CD8-positive, alpha-beta memory T cell (primary cell): ENCODE measurements at regions of chr17 and their contacts with region 1.

Region 1: DNA sequence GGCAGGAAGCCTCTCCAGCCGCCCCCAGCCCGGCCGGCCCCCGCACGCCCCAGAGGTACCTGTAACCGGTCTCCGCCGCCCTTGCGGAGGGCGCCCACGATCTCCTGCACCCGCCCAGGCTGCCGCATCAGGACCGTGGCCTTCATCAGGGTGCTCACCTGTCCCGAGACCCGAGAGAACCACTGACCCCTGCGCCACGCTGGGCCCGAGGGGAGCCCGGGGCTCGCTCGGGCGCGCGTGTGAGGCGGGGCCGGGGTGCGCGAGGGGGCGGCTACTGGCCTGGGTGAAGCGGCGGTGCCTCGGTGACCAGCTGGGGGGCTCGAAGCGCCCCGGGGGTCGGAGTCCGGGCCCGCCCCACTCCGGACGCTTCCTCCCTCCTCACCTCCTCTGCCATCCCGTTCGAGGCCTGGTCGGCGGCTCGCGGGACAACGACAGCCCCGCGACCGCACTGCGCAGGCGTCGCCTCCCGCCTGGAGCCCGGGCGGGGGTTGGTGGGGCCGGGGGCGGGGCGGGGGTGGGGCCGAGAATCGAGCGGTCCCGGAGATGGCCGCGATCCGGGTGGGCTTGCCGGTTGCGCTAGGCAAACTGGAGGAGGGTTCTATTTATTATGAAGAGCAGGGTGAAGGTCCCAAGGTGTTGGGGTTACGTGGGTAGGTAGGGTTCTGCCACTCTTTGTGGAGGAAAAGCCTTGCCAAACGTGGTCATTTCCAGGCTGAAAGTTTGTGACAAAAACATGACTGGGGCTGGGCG is at the start of gene NT5C3B:
- DNase-seq: peak; percentile 31 to 74 (median 54)
- H3K4me3 ChIP-seq: peak within 1 kb of the TSS; percentile 56
- H3K4me3 Mint-ChIP-seq: peak within 1 kb of the TSS; percentile 85 to 92 (median 88)
- H3K27ac ChIP-seq: peak within 1 kb of the TSS; percentile 43
- H3K27ac Mint-ChIP-seq: peak within 1 kb of the TSS in 7 of 8 donors; percentile 21 to 91 (median 78)
- H3K4me1 ChIP-seq: peaks cover 17% of the 10 kb centered on the region
- H3K4me1 Mint-ChIP-seq: peaks cover 11 to 23% (median 13%) of the 10 kb centered on the region in 3 donors
- H3K27me3 ChIP-seq: no peaks in the 10 kb centered on the region
- H3K27me3 Mint-ChIP-seq: peaks cover 0 to 3% of the 10 kb centered on the region in 2 donors
- total RNA-seq, gene NT5C3B: 48.5 to 50.2 TPM

Region 2: DNA sequence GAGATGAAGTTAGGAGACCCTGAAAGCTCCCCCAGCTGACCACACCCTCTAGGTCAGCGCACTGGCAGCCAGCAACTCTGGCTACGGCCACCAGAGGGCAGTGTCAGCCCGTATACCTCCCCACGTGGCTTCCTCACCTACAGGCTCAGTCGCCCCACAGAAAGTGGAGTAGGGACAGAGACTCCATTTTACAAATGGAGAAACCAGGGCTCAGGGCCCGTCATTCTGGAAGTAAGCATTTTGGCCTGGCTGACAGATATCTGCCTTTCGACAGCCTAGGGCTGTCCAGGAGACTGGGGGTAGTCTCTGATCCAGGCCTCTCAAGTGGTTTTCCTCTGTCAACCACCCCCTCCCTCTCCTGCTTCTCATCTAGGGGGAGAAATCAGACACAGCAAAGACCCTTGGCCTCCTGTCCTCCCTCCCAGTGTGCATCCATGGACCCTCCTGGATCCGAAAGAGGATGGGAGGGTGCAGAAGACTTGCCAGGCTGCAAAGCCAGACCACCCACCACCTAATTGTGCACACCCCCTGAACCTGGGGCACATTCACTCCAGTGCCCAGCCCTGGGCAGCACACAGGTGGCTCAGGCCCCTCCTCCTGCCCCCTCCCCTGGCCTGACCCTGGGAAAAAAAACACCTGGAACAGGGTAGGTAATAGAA is 97.8 kb before region 1 on chr17:
- CTCF ChIA-PET with region 1: no interaction called
- POLR2A ChIA-PET with region 1: no interaction called
- DNase-seq: peak; percentile 64 to 81 (median 68)
- H3K4me3 ChIP-seq: no peak overlapping the region
- H3K4me3 Mint-ChIP-seq: no peak overlapping the region
- H3K27ac ChIP-seq: no peak overlapping the region
- H3K27ac Mint-ChIP-seq: no peak overlapping the region
- H3K4me1 ChIP-seq: no peaks in the 10 kb centered on the region
- H3K4me1 Mint-ChIP-seq: peaks cover 0 to 14% (median 2%) of the 10 kb centered on the region in 3 donors
- H3K27me3 ChIP-seq: peaks cover 16% of the 10 kb centered on the region
- H3K27me3 Mint-ChIP-seq: peaks cover 25 to 35% of the 10 kb centered on the region in 2 donors

Region 3: GRCh38 chr17:41811549-41812380 is 24.2 kb before region 1 on chr17 and contains the start of gene P3H4:
- CTCF ChIA-PET with region 1: interaction called, 15 read pairs
- POLR2A ChIA-PET with region 1: no interaction called
- DNase-seq: peak; percentile 58 to 82 (median 78)
- H3K4me3 ChIP-seq: peak within 1 kb of the TSS; percentile 65
- H3K4me3 Mint-ChIP-seq: peak within 1 kb of the TSS; percentile 93 to 96 (median 94)
- H3K27ac ChIP-seq: peak within 1 kb of the TSS; percentile 24
- H3K27ac Mint-ChIP-seq: peak within 1 kb of the TSS; percentile 31 to 88 (median 84)
- H3K4me1 ChIP-seq: peaks cover 28% of the 10 kb centered on the region
- H3K4me1 Mint-ChIP-seq: peaks cover 25 to 34% (median 25%) of the 10 kb centered on the region in 3 donors
- H3K27me3 ChIP-seq: no peaks in the 10 kb centered on the region
- H3K27me3 Mint-ChIP-seq: peaks cover 0 to 8% of the 10 kb centered on the region in 2 donors
- total RNA-seq, gene P3H4: 2.6 to 3.7 TPM

Region 4: DNA sequence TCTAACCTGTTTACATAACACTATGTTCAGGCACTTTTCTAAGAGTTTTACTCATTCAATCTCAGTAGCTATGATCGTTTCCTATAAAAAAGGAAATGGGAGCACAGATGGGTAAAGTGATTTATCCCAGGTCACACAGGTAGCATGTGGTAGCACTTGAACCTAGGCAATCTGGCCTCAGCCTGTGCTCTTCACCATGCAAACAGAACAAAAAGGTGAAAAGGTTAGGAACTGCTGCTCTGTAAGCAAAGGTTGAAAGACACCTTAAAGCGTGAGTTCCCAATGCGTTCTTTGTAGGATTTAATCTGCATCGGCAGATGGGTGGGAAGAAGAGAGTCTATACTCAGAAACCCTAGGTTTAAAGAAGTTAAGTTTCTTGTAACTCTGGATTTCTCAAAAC is 44.2 kb after region 1 on chr17:
- CTCF ChIA-PET with region 1: no interaction called
- POLR2A ChIA-PET with region 1: no interaction called
- DNase-seq: no peak
- H3K4me3 ChIP-seq: no peak overlapping the region
- H3K4me3 Mint-ChIP-seq: no peak overlapping the region
- H3K27ac ChIP-seq: no peak overlapping the region
- H3K27ac Mint-ChIP-seq: peak overlapping the region in 1 of 8 donors; percentile 78
- H3K4me1 ChIP-seq: no peaks in the 10 kb centered on the region
- H3K4me1 Mint-ChIP-seq: peaks cover 0 to 5% (median 0%) of the 10 kb centered on the region in 3 donors
- H3K27me3 ChIP-seq: no peaks in the 10 kb centered on the region
- H3K27me3 Mint-ChIP-seq: peaks cover 0 to 2% of the 10 kb centered on the region in 2 donors